ENCODE measurements at regions of chr2 and their contacts with region 1.

Region 1: GRCh38 chr2:191677646-191678436 is at the start of gene NABP1:
- H3K4me3 Mint-ChIP-seq: peak within 1 kb of the TSS; percentile 95
- H3K27ac Mint-ChIP-seq: peak within 1 kb of the TSS; percentile 100
- H3K4me1 Mint-ChIP-seq: peaks cover 28% of the 10 kb centered on the region
- H3K27me3 Mint-ChIP-seq: no peaks in the 10 kb centered on the region

Region 2: DNA sequence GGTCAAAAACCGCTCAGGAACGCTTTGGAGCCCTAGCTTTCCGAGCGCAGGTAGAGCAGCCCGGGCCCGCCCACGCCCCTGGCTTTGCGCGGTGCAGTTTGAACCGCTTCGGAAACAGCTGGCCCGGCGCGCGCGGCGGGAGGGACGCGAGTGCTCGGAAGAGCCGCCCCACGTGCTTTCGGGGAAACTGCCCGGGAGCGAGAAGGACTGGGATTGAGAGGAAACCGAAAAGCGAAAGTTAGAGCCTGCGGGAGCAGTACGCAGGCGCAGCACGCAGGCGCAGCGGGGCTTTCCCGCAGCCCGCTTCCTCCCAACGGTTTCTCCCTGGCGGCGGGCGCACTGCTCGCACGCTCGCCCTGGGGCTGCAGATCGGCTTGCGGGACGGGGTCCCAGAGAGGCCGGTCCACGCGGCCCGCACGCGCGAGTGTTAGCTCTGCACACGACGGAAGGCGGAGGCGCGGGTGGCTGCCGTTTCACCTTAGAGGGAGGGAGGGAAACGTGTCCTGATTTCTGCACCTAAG is 657.6 kb before region 1 on chr2:
- intact Hi-C with region 1: loop called (anchors 10 kb)
- H3K4me3 Mint-ChIP-seq: no peak overlapping the region
- H3K27ac Mint-ChIP-seq: no peak overlapping the region
- H3K4me1 Mint-ChIP-seq: peaks cover 7% of the 10 kb centered on the region
- H3K27me3 Mint-ChIP-seq: no peaks in the 10 kb centered on the region

Region 3: DNA sequence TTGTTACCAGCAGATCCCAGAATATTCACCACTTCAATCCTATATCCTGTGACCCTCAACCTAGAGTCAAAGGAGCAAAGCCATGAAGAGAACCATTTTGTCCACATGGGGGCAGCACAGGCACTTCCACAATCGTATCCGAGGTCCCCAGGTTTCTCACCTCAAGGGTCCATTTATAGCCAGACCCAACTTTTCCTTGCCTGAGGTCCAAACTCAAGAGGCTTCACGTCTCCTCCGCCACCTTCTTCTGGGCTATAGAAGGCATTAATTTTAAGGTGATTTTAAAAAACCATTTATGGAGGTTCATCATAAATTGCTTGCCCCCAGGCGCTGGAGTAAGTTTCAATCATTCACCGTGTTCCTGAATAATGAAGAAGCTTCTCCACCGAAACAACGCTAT is 111.5 kb before region 1 on chr2:
- intact Hi-C with region 1: loop called (anchors 1 kb)
- H3K4me3 Mint-ChIP-seq: no peak overlapping the region
- H3K27ac Mint-ChIP-seq: no peak overlapping the region
- H3K4me1 Mint-ChIP-seq: peaks cover 34% of the 10 kb centered on the region
- H3K27me3 Mint-ChIP-seq: peaks cover 5% of the 10 kb centered on the region

Region 4: DNA sequence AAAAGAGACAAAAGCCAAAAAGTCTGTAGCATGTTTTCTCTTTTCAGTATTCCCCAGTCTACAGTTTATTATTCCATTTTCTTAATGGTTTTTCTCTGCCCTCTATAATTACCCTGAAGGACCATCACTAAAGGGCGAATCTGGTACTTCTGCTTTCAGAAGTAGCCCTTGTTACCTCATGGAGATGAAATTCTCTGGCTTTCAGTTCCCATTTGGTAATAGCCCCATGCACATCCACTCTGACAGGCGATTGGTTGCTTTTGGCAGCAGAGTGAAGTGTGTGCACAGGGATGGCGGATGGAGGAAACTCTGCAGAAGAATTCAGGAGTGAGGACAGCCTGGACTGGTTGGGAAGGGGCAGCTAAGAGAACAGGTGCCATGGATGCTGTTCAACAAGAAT is 66.2 kb before region 1 on chr2:
- intact Hi-C with region 1: loop called (anchors 5 kb)
- H3K4me3 Mint-ChIP-seq: peak overlapping the region; percentile 45
- H3K27ac Mint-ChIP-seq: peak overlapping the region; percentile 91
- H3K4me1 Mint-ChIP-seq: peaks cover 16% of the 10 kb centered on the region
- H3K27me3 Mint-ChIP-seq: no peaks in the 10 kb centered on the region

Region 5: GRCh38 chr2:191637182-191638078 is 40.4 kb before region 1 on chr2:
- intact Hi-C with region 1: loop called (anchors 5 kb)
- H3K4me3 Mint-ChIP-seq: peak overlapping the region; percentile 34
- H3K27ac Mint-ChIP-seq: peak overlapping the region; percentile 85
- H3K4me1 Mint-ChIP-seq: peaks cover 22% of the 10 kb centered on the region
- H3K27me3 Mint-ChIP-seq: no peaks in the 10 kb centered on the region

Region 6: GRCh38 chr2:191650896-191651773 is 26.7 kb before region 1 on chr2:
- intact Hi-C with region 1: loop called (anchors 1 kb)
- H3K4me3 Mint-ChIP-seq: no peak overlapping the region
- H3K27ac Mint-ChIP-seq: peak overlapping the region; percentile 90
- H3K4me1 Mint-ChIP-seq: peaks cover 43% of the 10 kb centered on the region
- H3K27me3 Mint-ChIP-seq: no peaks in the 10 kb centered on the region

Region 7: GRCh38 chr2:191773136-191773535 is 95.3 kb after region 1 on chr2:
- intact Hi-C with region 1: no loop called
- H3K4me3 Mint-ChIP-seq: no peak overlapping the region
- H3K27ac Mint-ChIP-seq: no peak overlapping the region
- H3K4me1 Mint-ChIP-seq: peaks cover 7% of the 10 kb centered on the region
- H3K27me3 Mint-ChIP-seq: no peaks in the 10 kb centered on the region